ENCODE measurements at regions of chr17 and their contacts with region 1.

Region 1: GRCh38 chr17:27601069-27601975 is 29.7 kb upstream of the LGALS9 start:
- DNase-seq: peak; percentile 77 to 81
- ATAC-seq: peak; percentile 39 to 61; a peak in 4 of 6 replicates
- H3K4me3 ChIP-seq: no peak overlapping the region
- H3K27ac ChIP-seq: peak overlapping the region in 1 of 2 experiments; percentile 8; a peak in 1 of 6 replicates
- H3K4me1 ChIP-seq: peaks cover 25% of the 10 kb centered on the region
- CTCF ChIP-seq: peak; percentile 98
- EP300 ChIP-seq: no peak
- POLR2A ChIP-seq: no peak
- RAD21 ChIP-seq: peak; percentile 95 to 99

Region 2: GRCh38 chr17:27245230-27245696 is 356.1 kb before region 1 on chr17:
- CTCF ChIA-PET with region 1: interaction called, 28 read pairs
- POLR2A ChIA-PET with region 1: no interaction called
- DNase-seq: peak; percentile 90 to 95
- ATAC-seq: peak; percentile 87 to 95
- H3K4me3 ChIP-seq: no peak overlapping the region
- H3K27ac ChIP-seq: peak overlapping the region; percentile 72 to 85
- H3K4me1 ChIP-seq: peaks cover 61% of the 10 kb centered on the region
- CTCF ChIP-seq: peak; percentile 87
- EP300 ChIP-seq: no peak
- POLR2A ChIP-seq: no peak
- RAD21 ChIP-seq: peak; percentile 96 to 99

Region 3: DNA sequence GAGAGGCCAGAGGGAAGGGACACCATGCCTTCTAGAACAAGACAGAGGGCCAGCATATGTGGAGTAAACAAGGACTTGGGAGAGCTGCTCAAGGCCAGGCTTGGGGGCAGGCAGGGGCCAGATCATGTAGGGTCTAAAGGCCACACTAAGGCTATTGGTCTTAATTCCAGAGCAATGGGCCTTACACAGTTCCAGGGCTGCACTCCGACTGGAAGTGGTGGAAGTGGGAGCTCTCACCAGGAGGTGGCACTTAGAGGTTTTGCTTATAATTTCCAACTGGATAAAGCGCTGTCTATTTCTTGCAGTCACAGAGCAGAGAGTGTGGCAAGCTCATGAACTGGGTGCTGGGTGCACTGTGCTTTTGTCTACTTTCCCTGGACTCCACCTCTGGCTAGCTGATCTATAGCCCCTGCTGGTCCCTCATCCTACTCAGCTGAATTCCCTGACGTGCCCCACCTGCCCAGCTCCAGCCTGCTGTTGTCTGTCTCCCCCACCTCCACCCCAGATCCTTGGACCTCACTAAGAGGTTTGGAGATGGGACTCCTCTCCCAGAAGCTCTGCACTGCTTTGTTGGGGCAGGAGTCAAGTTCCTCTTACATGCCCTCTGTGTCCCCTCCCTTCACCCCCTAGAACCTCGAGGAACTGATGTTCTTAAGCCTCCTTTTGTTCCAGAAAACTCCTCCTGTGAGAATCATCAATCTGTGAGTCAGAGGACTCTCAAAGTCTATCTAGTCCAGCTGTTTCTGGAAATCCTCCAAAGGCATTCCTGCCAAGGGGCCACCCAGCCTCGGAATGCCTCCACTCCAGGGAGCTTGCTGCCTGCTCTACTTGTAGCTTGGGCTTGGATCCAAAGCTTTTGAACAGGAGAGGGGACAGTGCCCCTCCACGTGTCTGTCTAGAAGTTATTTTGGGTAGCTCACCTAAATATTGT is 193.1 kb before region 1 on chr17:
- CTCF ChIA-PET with region 1: interaction called, 12 read pairs
- POLR2A ChIA-PET with region 1: interaction called, 4 read pairs
- DNase-seq: peak; percentile 33 to 62
- ATAC-seq: peak; percentile 69 to 88
- H3K4me3 ChIP-seq: no peak overlapping the region
- H3K27ac ChIP-seq: peak overlapping the region; percentile 56 to 59
- H3K4me1 ChIP-seq: peaks cover 32% of the 10 kb centered on the region
- CTCF ChIP-seq: no peak; the same call in 2 of the 3 replicates
- EP300 ChIP-seq: no peak
- POLR2A ChIP-seq: no peak
- RAD21 ChIP-seq: no peak; a peak in 1 of 5 replicates

Region 4: DNA sequence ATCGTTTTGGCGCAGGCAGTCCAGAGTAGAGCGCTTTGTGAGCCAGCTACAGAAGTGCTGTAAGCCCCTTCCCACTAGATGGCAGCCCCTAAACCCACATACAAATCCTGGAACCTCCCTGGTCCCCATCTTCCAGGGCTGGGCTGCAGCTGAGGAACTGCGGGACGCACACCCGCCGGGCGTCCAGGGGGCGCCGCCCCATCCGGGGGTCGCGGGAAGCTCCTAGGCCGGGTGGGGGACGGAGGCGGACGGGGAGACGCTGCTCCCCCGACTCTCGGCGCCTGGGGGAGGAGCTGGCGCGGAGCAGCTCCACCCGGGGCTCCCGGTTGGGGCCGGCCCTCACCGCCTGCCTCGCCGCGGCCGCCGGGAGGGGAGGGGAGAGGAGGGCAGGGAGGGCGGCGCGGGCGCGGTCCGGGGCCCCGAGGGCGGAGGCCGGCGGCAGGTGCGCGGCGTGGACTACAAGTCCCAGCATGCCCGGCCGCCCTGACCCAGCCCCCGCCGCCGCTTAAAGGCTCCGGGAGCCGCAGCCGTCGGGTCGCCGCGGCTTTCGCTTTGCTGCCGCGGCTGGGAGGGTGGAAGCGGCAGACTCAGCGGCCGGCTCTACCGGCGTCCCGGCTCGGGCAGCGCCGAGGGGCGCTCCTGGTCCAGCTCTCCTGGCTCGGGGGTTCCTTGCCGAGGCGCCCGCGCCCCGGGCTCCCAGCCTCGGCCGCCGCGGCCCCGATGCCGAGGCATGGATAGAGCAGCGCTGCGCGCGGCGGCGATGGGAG is 145.2 kb before region 1 on chr17 and contains the start of gene KSR1:
- CTCF ChIA-PET with region 1: interaction called, 141 read pairs
- POLR2A ChIA-PET with region 1: interaction called, 12 read pairs
- DNase-seq: peak; percentile 82 to 85
- ATAC-seq: peak; percentile 93 to 94
- H3K4me3 ChIP-seq: peak within 1 kb of the TSS; percentile 73
- H3K27ac ChIP-seq: peak within 1 kb of the TSS; percentile 86 to 95
- H3K4me1 ChIP-seq: peaks cover 39% of the 10 kb centered on the region
- CTCF ChIP-seq: peak; percentile 64
- EP300 ChIP-seq: no peak
- POLR2A ChIP-seq: peak; percentile 56
- RAD21 ChIP-seq: peak; percentile 67 to 74
- polyA plus RNA-seq, gene KSR1: 13.3 and 23.0 TPM in 2 replicates

Region 5: DNA sequence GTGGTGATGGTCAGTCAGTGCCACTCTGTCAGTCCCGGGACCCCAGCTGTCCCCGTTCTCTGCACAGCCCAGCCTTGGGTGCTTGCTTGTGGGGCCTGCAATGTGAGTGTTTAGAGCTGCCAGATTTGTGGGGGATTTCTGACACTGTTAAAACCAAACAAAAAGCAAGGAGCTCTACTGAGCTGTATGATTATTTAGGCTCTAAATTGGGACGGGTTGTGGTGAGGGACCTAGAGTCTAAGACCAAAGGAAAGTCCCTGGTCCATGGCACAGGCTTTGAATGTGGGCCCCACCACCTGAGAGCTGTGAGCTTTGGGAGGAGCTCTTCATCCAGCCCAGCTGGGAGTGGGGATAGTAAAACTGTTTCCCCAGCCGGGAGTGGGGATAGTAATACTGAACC is 81.8 kb before region 1 on chr17:
- CTCF ChIA-PET with region 1: interaction called, 41 read pairs
- POLR2A ChIA-PET with region 1: no interaction called
- DNase-seq: no peak
- ATAC-seq: 0 out of 6 replicates have a peak, but pooled peaks of 1 of the 2 experiments have one; percentile 28
- H3K4me3 ChIP-seq: no peak overlapping the region
- H3K27ac ChIP-seq: peak overlapping the region in 1 of 2 experiments; percentile 0; a peak in 1 of 6 replicates
- H3K4me1 ChIP-seq: no peaks in the 10 kb centered on the region
- CTCF ChIP-seq: no peak
- EP300 ChIP-seq: no peak
- POLR2A ChIP-seq: no peak
- RAD21 ChIP-seq: no peak

Region 6: DNA sequence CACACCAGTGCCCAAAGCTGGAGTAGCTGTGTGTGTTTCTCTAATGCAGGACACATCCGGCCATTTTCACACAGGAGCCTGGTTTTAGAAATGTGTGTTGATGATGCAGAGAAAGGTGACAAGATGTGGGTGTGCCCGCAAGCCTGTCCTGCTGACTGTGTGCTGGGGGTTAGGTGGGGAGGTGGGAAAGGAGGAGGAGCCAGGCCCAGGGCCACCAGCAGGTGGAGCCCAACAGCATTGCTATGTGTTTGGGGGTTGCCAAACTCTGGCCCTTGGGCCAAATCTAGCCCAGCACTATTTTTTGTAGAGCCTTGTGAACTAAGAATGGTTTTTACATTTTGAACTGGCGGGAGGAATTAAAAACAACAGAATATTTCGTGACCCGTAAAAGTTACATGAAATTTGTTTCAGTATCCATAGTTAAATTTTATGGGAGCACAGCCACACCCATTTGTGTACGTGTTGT is 32.0 kb before region 1 on chr17:
- CTCF ChIA-PET with region 1: interaction called, 523 read pairs
- POLR2A ChIA-PET with region 1: no interaction called
- DNase-seq: peak; percentile 63 to 65
- ATAC-seq: peak; percentile 72 to 86; a peak in 5 of 6 replicates
- H3K4me3 ChIP-seq: no peak overlapping the region
- H3K27ac ChIP-seq: peak overlapping the region; percentile 21 to 87; a peak in 5 of 6 replicates
- H3K4me1 ChIP-seq: peaks cover 79% of the 10 kb centered on the region
- CTCF ChIP-seq: peak; percentile 68
- EP300 ChIP-seq: no peak
- POLR2A ChIP-seq: no peak
- RAD21 ChIP-seq: peak; percentile 45 to 52

Region 7: DNA sequence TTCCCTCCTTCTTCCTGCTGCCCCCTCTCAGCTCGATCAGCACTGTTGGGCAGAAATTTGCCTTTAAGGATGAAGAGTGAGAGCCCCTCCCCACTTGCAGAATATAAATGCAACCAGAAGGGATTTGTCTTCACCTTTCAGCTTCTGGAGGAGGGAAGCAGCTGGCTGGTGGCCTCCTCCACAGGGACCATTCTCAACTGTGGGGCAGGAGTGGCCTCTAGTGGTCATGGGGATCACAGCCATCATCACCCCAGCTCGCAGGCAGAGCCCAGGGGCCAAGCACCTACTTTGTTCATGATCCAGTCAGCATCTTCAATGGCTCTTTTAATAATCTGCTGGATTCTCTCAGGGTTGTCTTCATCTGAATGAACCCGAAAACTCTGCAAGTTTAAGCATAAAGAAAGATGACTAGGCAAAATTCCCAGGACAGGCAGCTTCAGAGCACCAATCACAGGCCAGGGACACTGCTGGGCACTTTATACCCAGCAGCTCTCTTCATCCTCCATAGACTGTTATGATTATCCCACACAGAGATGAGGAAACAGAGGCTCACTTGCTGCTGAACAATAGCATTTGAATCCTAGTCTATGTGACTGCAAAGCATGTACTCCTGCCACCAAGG is 278.8 kb after region 1 on chr17:
- CTCF ChIA-PET with region 1: interaction called, 64 read pairs
- POLR2A ChIA-PET with region 1: no interaction called
- DNase-seq: peak; percentile 70 to 90
- ATAC-seq: peak; percentile 94 to 98
- H3K4me3 ChIP-seq: no peak overlapping the region
- H3K27ac ChIP-seq: no peak overlapping the region
- H3K4me1 ChIP-seq: no peaks in the 10 kb centered on the region
- CTCF ChIP-seq: peak; percentile 97
- EP300 ChIP-seq: no peak
- POLR2A ChIP-seq: no peak
- RAD21 ChIP-seq: peak; percentile 97 to 98